ENCODE measurements at regions of chr2 and their contacts with region 1.

Region 1: DNA sequence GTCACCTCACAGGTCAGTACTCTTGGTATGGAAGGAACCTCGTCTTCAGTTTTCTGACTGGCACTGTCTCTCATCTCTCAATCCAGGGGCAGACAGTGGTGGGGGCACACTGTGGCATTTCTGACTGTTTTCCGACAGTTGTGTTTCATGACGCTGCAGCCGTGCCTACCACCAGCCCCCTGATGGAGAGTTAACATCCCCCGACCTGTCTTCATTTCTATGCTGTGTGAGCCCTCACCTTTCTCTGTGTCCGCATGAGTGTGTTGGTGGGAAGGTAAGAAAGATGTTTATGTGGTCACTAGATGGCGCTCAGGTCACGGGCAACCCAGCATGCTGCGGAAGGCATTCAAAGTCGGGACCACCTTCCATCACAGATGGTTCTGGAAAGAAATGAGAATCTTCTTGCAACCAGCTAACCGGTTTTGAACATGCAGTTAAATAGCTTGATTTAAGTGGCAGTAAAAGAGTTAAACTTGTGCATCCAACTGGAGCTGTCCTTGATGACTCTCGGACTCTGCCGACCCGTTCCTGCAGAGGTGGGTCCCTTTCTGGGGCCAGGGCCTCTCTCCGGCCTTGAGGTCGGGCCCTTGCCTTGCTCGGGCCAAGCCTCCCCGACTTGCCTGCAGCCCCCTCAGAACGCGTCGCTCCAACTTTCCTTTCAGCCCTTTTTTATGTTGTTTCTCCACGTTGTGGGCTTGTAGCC is 92.4 kb downstream of the DYSF start:
- DNase-seq: peak; percentile 41 to 44
- H3K4me3 ChIP-seq: no peak overlapping the region
- H3K27ac ChIP-seq: no peak overlapping the region
- H3K4me1 ChIP-seq: no peaks in the 10 kb centered on the region
- H3K27me3 ChIP-seq: no peaks in the 10 kb centered on the region
- CTCF ChIP-seq: peak; percentile 51 to 69 (median 65)
- POLR2A ChIP-seq: no peak

Region 2: DNA sequence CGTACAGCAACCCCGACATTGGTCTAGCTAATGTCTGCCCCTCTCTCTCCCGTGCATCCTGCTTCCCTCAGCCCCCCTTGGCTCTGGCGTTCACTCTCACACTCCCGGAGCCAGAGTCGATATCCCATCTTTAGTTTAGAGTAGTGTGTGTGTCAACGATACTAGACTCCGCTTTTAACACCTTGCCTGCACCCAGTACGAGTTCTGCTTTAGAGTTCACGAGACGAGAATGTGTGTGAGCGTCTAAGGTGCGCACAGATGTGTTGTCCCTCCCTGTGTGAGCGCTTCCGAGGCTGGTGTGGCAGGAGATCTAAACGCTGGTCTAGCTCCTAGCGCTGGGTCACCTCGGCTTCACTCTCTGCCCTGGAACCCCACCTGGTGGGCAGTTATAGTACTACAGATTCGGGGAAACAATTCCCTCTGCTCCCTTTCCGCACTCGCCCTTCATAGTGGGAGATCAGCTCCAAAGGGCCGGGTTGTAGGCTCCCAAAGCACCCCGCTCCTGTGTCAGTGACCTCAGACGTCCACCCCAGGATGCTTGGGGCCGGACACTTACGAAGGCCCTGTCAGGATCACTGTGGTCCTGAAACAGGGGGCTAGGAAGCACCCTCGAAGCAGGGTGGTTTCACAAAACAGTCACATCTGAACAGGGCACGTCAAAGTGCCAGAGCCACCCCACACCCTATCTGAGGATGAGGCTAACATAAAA is 604.6 kb after region 1 on chr2:
- intact Hi-C with region 1: loop called (anchors 5 kb)
- DNase-seq: peak; percentile 72
- H3K4me3 ChIP-seq: no peak overlapping the region
- H3K27ac ChIP-seq: no peak overlapping the region
- H3K4me1 ChIP-seq: peaks cover 0 to 29% of the 10 kb centered on the region in 2 donors
- H3K27me3 ChIP-seq: peaks cover 22 to 36% of the 10 kb centered on the region in 2 donors
- CTCF ChIP-seq: peak; percentile 75 to 87 (median 86)
- POLR2A ChIP-seq: no peak

Measured in uterus (tissue), 4 donors.